ENCODE measurements at regions of chr2 and their contacts with region 1.

Region 1: DNA sequence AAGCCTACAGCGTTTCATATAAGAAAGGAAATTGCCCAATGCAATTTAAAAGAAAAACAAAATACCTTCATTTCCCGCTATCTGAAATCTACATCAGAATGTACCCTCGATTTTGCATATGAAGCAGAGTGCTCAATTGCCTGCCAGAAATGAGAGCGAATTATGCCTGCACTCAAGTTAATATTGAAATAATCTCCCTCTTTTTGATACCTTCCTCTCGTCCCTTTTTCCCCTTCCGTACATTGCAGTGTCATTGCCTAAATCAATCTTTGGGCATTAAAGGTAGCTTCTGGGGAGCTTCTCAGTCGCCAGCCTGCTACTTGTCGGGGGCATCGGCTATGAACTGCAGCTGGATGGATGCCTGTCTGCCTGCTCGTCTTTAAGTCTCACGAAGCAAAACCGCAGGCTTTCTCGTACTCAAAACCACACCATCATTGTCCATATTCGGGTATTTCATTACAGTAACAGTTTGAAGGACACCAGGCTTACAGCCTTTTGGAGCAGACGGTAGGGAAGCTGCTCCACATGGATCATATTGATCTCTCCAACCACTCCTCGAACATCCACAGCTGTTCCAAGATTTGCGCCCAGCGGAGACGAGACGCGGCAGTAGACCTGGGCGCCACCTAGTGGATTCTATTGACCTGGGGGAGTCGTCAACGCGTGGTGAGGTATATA is 64.0 kb upstream of the HNRNPA3 start:
- DNase-seq: peak; percentile 87
- ATAC-seq: peak; percentile 96
- H3K4me3 Mint-ChIP-seq: peak overlapping the region; percentile 81
- H3K27ac Mint-ChIP-seq: peak overlapping the region; percentile 28
- H3K4me1 Mint-ChIP-seq: peaks cover 14% of the 10 kb centered on the region
- H3K27me3 Mint-ChIP-seq: peaks cover 32% of the 10 kb centered on the region

Region 2: GRCh38 chr2:176126929-176127773 is 1021.5 kb before region 1 on chr2:
- CTCF ChIA-PET with region 1: interaction called, 24 read pairs
- POLR2A ChIA-PET with region 1: no interaction called
- intact Hi-C with region 1: loop called (anchors 1 to 2 kb)
- DNase-seq: peak; percentile 81
- ATAC-seq: no peak
- H3K4me3 Mint-ChIP-seq: no peak overlapping the region
- H3K27ac Mint-ChIP-seq: no peak overlapping the region
- H3K4me1 Mint-ChIP-seq: peaks cover 31% of the 10 kb centered on the region
- H3K27me3 Mint-ChIP-seq: peaks cover 67% of the 10 kb centered on the region

Region 3: DNA sequence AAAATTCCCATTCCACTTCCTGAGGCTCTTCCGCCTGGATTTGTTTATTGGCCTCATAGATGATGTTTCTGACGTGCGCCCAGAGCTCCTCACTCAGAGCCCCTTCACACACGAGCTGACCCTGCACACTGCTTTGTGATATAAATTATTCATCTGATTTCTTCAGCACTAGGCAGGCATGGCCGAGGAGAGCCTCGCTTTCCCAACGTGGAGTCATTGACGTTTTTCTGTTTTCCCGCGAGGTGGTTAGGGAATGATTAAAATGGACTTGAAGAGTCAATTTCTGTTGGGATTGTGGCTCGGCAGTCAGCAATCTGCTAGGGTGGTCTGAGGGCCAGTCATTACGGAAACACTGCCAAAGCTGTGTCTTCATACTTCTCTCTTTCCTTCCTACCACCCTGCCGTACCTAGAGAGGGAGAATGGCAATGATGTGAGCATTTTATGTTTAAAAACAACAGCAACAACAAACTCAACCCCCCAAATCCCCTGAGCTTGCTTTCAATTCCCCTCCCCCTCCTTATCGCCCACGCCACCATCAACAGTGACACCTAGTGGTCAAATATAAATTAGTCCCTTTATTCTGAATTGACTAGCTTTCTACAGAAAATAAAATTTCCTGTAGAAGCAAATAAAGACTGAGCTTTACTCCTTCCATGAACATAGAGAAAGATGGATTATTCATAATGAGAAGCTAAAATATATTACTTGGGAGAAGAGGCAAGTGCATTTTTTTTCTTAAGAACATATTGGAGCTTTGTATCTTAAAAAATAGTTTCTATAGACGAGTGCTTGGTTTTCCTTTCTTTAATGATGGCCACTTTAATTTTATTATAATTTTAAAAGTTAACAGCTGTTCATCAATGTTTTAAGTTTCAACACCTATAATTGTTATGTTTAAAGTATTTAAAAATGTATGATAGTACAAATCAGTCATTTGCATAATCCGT is 594.2 kb before region 1 on chr2:
- CTCF ChIA-PET with region 1: no interaction called
- POLR2A ChIA-PET with region 1: no interaction called
- intact Hi-C with region 1: loop called in 1 of 2 experiments (anchors 10 kb)
- DNase-seq: peak; percentile 56
- ATAC-seq: peak; percentile 49
- H3K4me3 Mint-ChIP-seq: peak overlapping the region; percentile 60
- H3K27ac Mint-ChIP-seq: peak overlapping the region; percentile 26
- H3K4me1 Mint-ChIP-seq: peaks cover 11% of the 10 kb centered on the region
- H3K27me3 Mint-ChIP-seq: peaks cover 33% of the 10 kb centered on the region

Region 4: GRCh38 chr2:176744146-176744545 is 404.5 kb before region 1 on chr2:
- CTCF ChIA-PET with region 1: interaction called, 3 read pairs
- POLR2A ChIA-PET with region 1: no interaction called
- intact Hi-C with region 1: loop called in 1 of 2 experiments (anchors 5 kb)
- DNase-seq: no peak
- ATAC-seq: no peak
- H3K4me3 Mint-ChIP-seq: no peak overlapping the region
- H3K27ac Mint-ChIP-seq: no peak overlapping the region
- H3K4me1 Mint-ChIP-seq: peaks cover 3% of the 10 kb centered on the region
- H3K27me3 Mint-ChIP-seq: peaks cover under 1% of the 10 kb centered on the region

Region 5: DNA sequence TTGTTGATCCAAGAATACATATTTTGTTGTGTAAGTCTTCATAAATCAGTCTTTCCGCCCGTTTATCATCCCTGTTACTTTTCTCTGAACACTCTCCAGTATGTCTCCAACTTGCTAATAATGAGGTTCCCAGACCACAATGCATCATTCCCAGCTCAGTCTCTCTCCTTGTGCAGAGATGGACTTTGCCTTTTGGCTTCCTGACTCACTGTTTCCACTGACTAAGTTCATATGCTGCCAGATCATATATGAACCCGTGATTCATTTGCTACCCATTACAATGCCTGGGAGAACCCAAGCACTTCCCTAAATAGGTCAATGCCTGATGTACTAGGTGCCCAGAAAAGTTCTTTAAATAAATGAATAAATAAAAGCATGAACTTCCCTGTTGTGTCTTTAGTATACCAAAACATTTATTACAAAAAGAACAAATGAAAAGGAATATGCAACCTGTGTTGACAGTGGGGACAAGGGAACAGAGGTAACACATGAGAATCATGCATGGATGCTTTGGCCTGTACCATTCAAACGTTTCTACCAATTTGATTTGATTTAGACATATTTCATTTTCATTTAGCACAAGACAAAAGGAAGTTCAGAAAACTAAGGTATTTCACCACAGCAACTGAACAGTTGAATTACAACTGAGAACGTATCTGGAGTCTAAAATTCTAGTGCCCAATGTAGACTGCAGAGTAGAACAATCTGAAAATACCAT is 151.4 kb before region 1 on chr2:
- CTCF ChIA-PET with region 1: interaction called, 4 read pairs
- POLR2A ChIA-PET with region 1: no interaction called
- intact Hi-C with region 1: loop called (anchors 5 kb)
- DNase-seq: peak; percentile 43
- ATAC-seq: peak; percentile 87
- H3K4me3 Mint-ChIP-seq: no peak overlapping the region
- H3K27ac Mint-ChIP-seq: peak overlapping the region; percentile 51
- H3K4me1 Mint-ChIP-seq: peaks cover 30% of the 10 kb centered on the region
- H3K27me3 Mint-ChIP-seq: no peaks in the 10 kb centered on the region

Region 6: DNA sequence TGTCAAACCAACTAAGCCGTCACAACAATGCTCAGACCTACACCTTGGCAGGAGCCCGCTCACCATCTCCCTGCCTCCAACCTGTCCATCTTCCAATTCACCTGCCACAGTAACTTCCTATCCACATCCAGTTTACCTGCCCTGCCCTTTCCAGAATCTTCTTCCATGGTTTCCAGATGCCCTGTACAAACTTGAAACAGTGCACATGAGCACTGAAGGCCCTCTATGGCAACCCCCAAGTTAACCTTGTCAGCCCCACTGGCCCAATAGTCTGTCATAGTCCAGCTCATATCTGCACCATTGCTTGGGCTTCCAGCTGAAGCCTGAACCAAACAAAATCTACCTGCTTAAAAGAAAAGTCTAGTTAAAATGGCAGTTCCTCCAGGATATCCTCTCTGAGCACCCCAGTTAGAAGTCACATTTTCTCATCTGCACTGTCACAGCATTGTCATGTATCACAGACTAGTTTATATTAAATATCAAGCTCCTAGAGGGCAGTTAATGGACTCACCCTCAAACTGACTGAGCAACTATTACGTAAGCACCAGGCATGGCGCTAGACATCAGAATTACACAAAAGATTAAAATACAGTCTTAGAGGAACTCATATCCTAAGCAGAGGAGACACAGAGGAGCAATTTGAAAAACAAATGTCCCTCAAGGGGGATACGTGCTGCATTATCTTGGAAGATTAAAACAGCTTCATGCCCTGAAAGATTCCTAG is 104.4 kb after region 1 on chr2:
- CTCF ChIA-PET with region 1: no interaction called
- POLR2A ChIA-PET with region 1: no interaction called
- intact Hi-C with region 1: no loop called
- DNase-seq: no peak
- ATAC-seq: no peak
- H3K4me3 Mint-ChIP-seq: no peak overlapping the region
- H3K27ac Mint-ChIP-seq: peak overlapping the region; percentile 86
- H3K4me1 Mint-ChIP-seq: peaks cover 86% of the 10 kb centered on the region
- H3K27me3 Mint-ChIP-seq: no peaks in the 10 kb centered on the region

Region 7: GRCh38 chr2:177332041-177332991 is 183.7 kb after region 1 on chr2:
- CTCF ChIA-PET with region 1: interaction called, 18 read pairs
- POLR2A ChIA-PET with region 1: no interaction called
- intact Hi-C with region 1: no loop called
- DNase-seq: peak; percentile 59
- ATAC-seq: peak; percentile 90
- H3K4me3 Mint-ChIP-seq: no peak overlapping the region
- H3K27ac Mint-ChIP-seq: no peak overlapping the region
- H3K4me1 Mint-ChIP-seq: peaks cover 17% of the 10 kb centered on the region
- H3K27me3 Mint-ChIP-seq: no peaks in the 10 kb centered on the region

Region 8: DNA sequence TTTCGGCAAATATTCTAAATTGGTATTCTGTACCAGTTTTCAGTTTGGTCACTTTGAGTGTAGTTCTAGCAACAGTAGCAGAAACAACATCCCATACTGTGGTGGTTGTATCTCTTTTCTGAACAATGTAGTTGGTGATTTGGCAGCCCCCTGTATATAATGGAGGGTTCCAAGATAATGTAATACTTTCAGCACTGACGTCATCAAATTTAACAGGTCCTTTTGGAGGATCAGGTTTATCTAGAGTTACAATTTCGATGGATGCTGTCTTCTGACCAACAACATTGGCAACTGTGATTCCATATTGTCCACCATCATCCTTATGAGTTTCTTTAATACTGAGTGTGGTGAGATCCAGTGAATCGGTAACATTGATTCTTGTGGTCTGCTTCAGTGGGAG is 1419.6 kb after region 1 on chr2:
- CTCF ChIA-PET with region 1: no interaction called
- POLR2A ChIA-PET with region 1: no interaction called
- intact Hi-C with region 1: no loop called
- DNase-seq: no peak
- ATAC-seq: no peak
- H3K4me3 Mint-ChIP-seq: no peak overlapping the region
- H3K27ac Mint-ChIP-seq: no peak overlapping the region
- H3K4me1 Mint-ChIP-seq: no peaks in the 10 kb centered on the region
- H3K27me3 Mint-ChIP-seq: no peaks in the 10 kb centered on the region

Measured in activated CD4-positive, alpha-beta T cell treated with anti-CD3 and anti-CD28 coated beads for 36 hours (primary cell).